ENCODE measurements at regions of chr12 and their contacts with region 1.

Region 1: DNA sequence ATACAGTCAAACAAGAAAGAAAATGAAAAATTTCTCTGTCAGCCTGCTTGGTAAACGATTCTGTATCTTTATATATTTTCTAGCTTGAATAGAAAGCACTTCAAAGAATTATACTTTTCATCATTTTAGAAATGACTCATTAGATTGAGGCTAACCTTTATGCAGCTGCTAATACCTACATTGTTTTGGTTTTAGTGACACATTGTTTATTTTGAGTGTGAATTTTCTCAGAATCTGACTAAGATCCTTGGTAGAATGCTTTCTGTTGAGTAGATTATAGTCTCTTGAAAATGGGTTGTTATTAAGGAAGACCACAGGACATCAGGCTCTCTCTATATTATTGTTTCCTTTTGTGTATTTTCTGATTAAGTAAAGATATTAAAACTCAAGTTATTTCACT is at the start of gene PMCH:
- DNase-seq: no peak
- ATAC-seq: peak; percentile 89
- H3K4me3 Mint-ChIP-seq: no peak within 1 kb of the TSS
- H3K27ac Mint-ChIP-seq: no peak within 1 kb of the TSS
- H3K4me1 Mint-ChIP-seq: peaks cover 11% of the 10 kb centered on the region
- H3K27me3 Mint-ChIP-seq: no peaks in the 10 kb centered on the region
- total RNA-seq, gene PMCH: 0.57 TPM in 1 of 2 experiments, not detected in the other

Region 2: DNA sequence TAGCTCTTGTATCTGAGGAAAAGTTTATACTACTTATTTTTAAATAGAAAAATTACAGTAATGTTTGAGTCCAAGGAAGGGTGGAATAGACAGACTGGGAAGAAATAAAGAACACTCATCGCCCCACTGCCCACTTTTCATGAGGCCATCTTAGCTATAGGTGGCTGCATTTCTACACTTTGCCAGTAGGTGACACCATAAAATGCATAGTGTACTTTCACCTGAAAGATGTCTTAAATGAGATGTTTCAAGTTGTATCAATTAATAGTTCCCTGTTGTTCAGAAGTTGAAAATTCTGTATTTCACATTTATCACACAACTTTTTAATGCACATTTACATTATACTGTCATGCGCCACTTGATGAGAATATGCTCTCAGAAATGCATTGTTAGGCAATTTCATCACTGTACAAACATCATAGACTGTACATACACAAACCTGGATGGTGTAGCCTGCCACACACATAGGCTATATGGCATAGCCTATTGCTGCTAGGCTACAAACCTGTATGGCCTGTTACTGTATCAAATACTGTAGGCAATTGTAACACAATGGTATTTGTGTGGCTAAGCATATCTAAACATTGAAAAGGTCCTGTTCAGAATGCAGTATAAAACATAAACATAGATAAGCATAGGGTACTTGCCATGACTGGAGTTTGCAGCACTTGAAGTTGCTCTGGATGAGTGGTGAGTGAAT is 27.7 kb before region 1 on chr12:
- CTCF ChIA-PET with region 1: interaction called, 3 read pairs
- POLR2A ChIA-PET with region 1: no interaction called
- intact Hi-C with region 1: loop called in 1 of 2 experiments (anchors 2 kb)
- DNase-seq: peak; percentile 15
- ATAC-seq: peak; percentile 60
- H3K4me3 Mint-ChIP-seq: no peak overlapping the region
- H3K27ac Mint-ChIP-seq: no peak overlapping the region
- H3K4me1 Mint-ChIP-seq: peaks cover 14% of the 10 kb centered on the region
- H3K27me3 Mint-ChIP-seq: no peaks in the 10 kb centered on the region

Region 3: DNA sequence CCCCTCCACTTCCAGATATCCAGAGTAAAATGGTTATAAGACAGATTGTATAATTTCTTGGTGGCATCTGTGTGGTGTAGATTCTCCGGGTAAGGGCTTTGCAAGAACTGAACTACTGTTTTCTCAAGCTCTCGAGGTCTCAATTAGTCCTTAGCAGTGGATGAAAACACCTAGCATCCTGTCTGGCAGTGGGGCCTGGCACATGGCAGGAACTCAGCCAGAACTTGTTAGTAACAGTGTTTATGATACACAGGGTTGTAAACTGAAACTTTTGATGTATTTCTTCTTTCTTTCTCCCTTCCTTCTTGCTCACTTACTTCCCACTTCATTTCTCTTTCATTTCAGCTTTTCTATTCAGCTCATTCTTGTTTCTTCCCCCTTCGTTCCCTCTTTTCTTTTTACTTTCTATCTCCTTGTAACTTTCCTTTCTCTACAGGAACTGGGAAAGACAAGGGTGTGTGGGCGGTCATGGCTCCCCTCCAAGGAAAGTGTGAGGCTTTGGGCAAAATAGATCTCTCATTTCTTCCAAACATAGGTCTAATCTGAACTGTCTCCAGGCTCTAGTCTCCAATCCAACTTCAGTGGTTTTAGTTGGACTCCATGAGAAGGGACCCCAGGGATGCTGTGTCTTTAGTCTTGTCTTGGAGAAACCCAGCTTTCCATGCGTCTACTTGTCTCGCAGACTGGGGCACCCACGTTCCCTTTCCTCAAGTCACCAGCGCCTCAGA is 559.5 kb after region 1 on chr12:
- CTCF ChIA-PET with region 1: no interaction called
- POLR2A ChIA-PET with region 1: no interaction called
- intact Hi-C with region 1: no loop called
- DNase-seq: no peak
- ATAC-seq: no peak
- H3K4me3 Mint-ChIP-seq: no peak overlapping the region
- H3K27ac Mint-ChIP-seq: no peak overlapping the region
- H3K4me1 Mint-ChIP-seq: no peaks in the 10 kb centered on the region
- H3K27me3 Mint-ChIP-seq: no peaks in the 10 kb centered on the region

Measured in activated CD4-positive, alpha-beta T cell treated with anti-CD3 and anti-CD28 coated beads for 36 hours (primary cell).